ENCODE measurements at regions of chr6 and their contacts with region 1.

Region 1: DNA sequence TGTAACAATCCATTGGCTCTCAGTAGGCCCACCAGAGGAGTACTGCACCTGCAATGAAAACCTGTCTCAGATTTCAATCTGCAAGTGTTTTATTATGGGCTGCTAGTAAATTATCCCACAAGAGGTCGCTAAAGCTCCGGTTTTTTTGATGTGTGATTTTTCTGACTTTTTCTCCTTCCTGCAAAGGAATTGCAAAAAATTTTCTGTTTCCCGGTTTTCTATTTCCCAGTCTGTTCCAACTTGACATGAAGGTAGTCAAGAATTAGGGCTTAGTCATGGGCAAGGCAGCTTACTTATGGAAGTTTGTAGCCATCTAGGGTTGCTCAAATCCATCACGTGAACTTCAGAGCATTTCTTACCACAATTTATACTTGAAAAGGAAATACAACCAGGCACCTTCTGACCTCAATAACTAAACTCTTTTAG is 38.5 kb upstream of the AHI1 start:
- DNase-seq: peak; percentile 24
- CTCF ChIP-seq: peak; percentile 62

Region 2: GRCh38 chr6:135909737-135910387 is 373.9 kb after region 1 on chr6:
- in situ Hi-C with region 1: loop called (anchors 25 kb)
- DNase-seq: peak; percentile 66
- CTCF ChIP-seq: peak; percentile 62

Region 3: DNA sequence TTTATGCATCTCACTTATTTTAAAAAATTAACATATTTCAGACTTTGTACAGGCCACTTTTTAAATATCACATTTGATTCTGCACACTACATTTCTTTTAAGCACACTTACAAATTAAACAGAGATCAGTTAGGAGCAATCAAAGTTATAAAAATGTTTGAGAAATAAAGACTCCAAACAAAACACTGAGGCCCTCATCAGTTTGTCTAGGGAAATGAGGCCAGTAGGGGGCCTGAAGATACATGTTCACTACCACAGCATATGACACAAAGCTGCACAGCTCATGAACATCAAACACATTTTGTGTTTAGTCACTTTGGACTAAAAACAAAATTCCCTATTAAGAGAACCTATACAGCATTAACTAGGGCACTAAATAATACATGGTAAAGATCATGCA is 496.0 kb after region 1 on chr6:
- in situ Hi-C with region 1: no loop called
- DNase-seq: peak; percentile 40
- CTCF ChIP-seq: no peak

Region 4: GRCh38 chr6:136201732-136202131 is 665.7 kb after region 1 on chr6:
- in situ Hi-C with region 1: loop called (anchors 25 kb)
- DNase-seq: no peak
- CTCF ChIP-seq: no peak